B cell (primary cell): ENCODE measurements at regions of chr1 and their contacts with region 1.

Region 1: GRCh38 chr1:96845464-96845863 is 123.9 kb downstream of the PTBP2 start:
- DNase-seq: peak; percentile 15
- ATAC-seq: no peak
- H3K4me3 ChIP-seq: no peak overlapping the region
- H3K4me3 Mint-ChIP-seq: no peak overlapping the region
- H3K27ac ChIP-seq: no peak overlapping the region
- H3K27ac Mint-ChIP-seq: no peak overlapping the region
- H3K4me1 ChIP-seq: no peaks in the 10 kb centered on the region
- H3K4me1 Mint-ChIP-seq: no peaks in the 10 kb centered on the region
- H3K27me3 ChIP-seq: no peaks in the 10 kb centered on the region
- H3K27me3 Mint-ChIP-seq: no peaks in the 10 kb centered on the region
- CTCF ChIP-seq: peak; percentile 27

Region 2: GRCh38 chr1:96236156-96236739 is 609.2 kb before region 1 on chr1:
- CTCF ChIA-PET with region 1: no interaction called
- POLR2A ChIA-PET with region 1: no interaction called
- intact Hi-C with region 1: loop called (anchors 10 kb)
- DNase-seq: peak; percentile 9
- ATAC-seq: no peak
- H3K4me3 ChIP-seq: no peak overlapping the region
- H3K4me3 Mint-ChIP-seq: no peak overlapping the region
- H3K27ac ChIP-seq: no peak overlapping the region
- H3K27ac Mint-ChIP-seq: no peak overlapping the region
- H3K4me1 ChIP-seq: no peaks in the 10 kb centered on the region
- H3K4me1 Mint-ChIP-seq: no peaks in the 10 kb centered on the region
- H3K27me3 ChIP-seq: no peaks in the 10 kb centered on the region
- H3K27me3 Mint-ChIP-seq: no peaks in the 10 kb centered on the region
- CTCF ChIP-seq: no peak

Region 3: DNA sequence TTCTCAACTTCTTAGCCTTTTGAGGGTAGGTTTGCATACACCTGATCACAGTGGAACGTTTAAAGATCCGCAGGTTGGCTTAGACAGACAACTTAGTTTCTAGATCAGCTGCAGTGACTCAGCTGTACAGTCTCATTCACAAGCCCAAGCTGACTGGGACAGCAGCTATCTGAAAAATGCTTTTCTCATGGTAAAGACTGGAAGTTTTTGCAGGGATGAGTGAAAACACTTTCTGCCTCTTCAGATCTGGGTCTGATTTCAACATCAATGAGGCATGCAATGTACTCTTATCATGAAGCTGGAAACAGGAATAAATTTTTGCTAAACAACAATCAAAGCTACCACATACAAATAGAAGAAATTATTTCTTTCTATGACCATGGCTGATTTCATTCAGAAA is 185.0 kb before region 1 on chr1:
- CTCF ChIA-PET with region 1: no interaction called
- POLR2A ChIA-PET with region 1: no interaction called
- intact Hi-C with region 1: no loop called
- DNase-seq: no peak
- ATAC-seq: no peak
- H3K4me3 ChIP-seq: no peak overlapping the region
- H3K4me3 Mint-ChIP-seq: no peak overlapping the region
- H3K27ac ChIP-seq: no peak overlapping the region
- H3K27ac Mint-ChIP-seq: no peak overlapping the region
- H3K4me1 ChIP-seq: no peaks in the 10 kb centered on the region
- H3K4me1 Mint-ChIP-seq: no peaks in the 10 kb centered on the region
- H3K27me3 ChIP-seq: no peaks in the 10 kb centered on the region
- H3K27me3 Mint-ChIP-seq: no peaks in the 10 kb centered on the region
- CTCF ChIP-seq: no peak

Region 4: DNA sequence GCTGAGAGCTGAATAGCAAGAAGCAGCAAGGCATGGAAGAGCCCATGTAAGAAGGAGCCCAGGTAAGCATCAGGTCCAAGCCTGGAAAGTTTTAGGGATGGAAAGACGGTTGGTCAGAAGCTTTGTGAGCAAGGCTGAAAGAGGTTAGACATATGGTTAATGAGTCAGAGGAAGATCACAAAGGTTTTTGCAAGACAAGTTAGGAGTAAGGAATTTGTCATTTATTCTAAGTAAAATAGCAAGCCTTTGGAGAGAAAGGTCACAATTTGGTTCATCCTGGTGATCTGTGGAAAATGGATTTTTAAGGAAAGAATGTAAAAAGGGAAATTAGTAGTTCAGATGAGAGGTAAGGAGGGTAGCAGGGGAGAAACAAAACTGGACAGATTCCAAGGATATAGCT is 968.7 kb after region 1 on chr1:
- CTCF ChIA-PET with region 1: no interaction called
- POLR2A ChIA-PET with region 1: no interaction called
- intact Hi-C with region 1: no loop called
- DNase-seq: no peak
- ATAC-seq: no peak
- H3K4me3 ChIP-seq: no peak overlapping the region
- H3K4me3 Mint-ChIP-seq: no peak overlapping the region
- H3K27ac ChIP-seq: no peak overlapping the region
- H3K27ac Mint-ChIP-seq: no peak overlapping the region
- H3K4me1 ChIP-seq: no peaks in the 10 kb centered on the region
- H3K4me1 Mint-ChIP-seq: no peaks in the 10 kb centered on the region
- H3K27me3 ChIP-seq: no peaks in the 10 kb centered on the region
- H3K27me3 Mint-ChIP-seq: no peaks in the 10 kb centered on the region
- CTCF ChIP-seq: no peak